Motor neuron (in vitro differentiated cells): ENCODE measurements at regions of chr10 and their contacts with region 1.

Region 1: DNA sequence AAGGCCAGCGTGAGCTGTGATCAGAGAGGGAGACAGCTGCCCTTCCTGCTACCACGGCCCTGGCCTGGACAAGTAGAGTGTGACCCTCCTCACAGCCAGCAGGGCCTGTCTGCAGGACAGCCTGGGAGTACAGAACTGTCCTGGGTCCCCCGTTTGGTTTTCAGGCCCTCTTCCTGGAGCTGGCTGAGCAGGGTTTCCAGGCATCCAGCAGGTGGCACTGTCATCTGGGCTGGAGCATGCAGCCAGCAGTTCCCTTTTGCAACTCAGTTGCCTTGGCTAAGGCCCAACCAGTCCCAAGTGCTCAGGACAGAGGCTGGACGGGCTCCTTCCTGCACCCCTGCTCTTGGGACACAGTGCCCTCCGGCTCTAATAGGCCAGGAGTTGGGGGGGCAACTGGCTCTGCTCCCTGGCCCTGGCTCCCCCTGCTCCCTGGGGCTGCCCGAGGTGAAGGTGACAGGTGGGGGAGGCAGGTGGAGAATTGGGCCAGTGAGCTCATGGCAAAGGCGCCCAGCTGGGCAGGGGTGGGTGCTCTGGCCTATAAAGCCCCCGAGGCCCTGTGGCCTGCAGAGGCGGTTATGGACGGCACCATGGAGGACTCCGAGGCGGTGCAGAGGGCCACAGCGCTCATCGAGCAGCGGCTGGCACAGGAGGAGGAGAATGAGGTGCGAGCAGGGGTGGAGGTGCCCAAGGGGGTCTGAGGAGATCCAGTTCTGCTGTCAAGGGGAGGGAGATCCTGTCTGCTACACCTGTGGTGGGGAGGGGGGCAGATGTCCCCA is at the start of gene ANKRD2:
- ATAC-seq: peak; percentile 62 to 94 (median 81)
- H3K4me3 ChIP-seq: no peak within 1 kb of the TSS
- H3K27ac ChIP-seq: no peak within 1 kb of the TSS
- H3K4me1 ChIP-seq: no peaks in the 10 kb centered on the region
- total RNA-seq, gene ANKRD2: 0.21 TPM in 1 of 8 experiments, not detected in the others

Region 2: GRCh38 chr10:97463363-97464132 is 108.9 kb before region 1 on chr10:
- in situ Hi-C with region 1: loop called in 1 of 9 experiments (anchors 25 kb)
- ATAC-seq: peak in 7 of 8 experiments; percentile 22 to 72 (median 51)
- H3K4me3 ChIP-seq: no peak overlapping the region
- H3K27ac ChIP-seq: no peak overlapping the region
- H3K4me1 ChIP-seq: no peaks in the 10 kb centered on the region